ENCODE measurements at regions of chr9 and their contacts with region 1.

Region 1: GRCh38 chr9:124527781-124528180 is 20.6 kb upstream of the NR5A1 start:
- DNase-seq: no peak
- CTCF ChIP-seq: no peak

Region 2: DNA sequence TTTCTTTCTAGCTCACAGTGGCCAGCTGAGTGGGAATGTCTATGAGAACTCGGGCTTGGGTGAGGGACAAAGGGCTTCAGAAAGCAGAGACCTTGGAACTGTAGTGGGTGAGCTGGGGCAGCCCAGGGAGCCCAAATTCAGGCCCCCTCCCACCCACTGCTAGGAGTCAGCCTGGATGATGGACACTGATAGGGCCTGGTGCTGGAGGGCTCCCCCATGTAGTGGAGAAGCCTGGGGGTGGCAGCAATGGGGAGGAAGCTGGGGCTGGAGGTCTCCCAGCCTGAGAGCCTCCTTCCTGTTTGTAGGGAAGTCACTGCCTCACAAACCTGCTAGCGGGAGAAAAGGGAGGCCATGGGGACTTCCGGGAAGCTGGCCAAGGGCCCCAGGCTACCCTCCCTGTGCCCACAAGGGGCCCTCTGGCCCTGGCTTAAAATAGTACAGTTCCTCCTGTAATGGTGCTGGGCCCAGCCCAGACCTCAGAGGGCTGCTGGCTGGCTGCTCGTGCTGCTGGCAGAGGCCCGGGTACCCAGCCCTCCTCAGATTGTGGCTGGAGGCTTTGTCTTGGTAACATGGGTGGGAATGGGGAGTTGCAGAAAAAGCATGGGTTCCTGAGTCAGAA is 14.3 kb before region 1 on chr9:
- CTCF ChIA-PET with region 1: interaction called, 11 read pairs
- POLR2A ChIA-PET with region 1: no interaction called
- DNase-seq: no peak
- CTCF ChIP-seq: no peak

Region 3: GRCh38 chr9:124537926-124538325 is 10.1 kb after region 1 on chr9:
- CTCF ChIA-PET with region 1: interaction called, 55 read pairs
- POLR2A ChIA-PET with region 1: no interaction called
- DNase-seq: no peak
- CTCF ChIP-seq: no peak

Region 4: DNA sequence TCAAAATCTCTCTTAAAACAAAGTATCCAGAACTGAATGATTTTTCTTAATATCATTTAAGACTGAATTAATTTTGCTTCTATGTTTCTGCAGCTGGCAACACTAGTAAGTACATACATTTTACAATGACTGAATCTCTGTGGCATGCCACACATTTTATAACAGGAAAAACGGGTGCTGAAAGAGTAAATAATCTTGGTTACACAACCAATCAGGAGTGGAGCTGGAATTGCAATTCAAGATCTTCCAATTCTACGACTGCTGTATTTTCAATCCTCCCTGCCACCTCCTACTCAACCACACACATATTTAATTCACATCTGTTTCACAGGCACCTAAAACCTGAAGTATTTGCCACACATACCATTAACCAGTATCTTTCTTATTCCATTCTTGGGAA is 32.1 kb after region 1 on chr9:
- CTCF ChIA-PET with region 1: no interaction called
- POLR2A ChIA-PET with region 1: no interaction called
- DNase-seq: no peak
- CTCF ChIP-seq: no peak

Measured in GM10248 (cell line).